ENCODE measurements at regions of chr16 and their contacts with region 1.

Region 1: DNA sequence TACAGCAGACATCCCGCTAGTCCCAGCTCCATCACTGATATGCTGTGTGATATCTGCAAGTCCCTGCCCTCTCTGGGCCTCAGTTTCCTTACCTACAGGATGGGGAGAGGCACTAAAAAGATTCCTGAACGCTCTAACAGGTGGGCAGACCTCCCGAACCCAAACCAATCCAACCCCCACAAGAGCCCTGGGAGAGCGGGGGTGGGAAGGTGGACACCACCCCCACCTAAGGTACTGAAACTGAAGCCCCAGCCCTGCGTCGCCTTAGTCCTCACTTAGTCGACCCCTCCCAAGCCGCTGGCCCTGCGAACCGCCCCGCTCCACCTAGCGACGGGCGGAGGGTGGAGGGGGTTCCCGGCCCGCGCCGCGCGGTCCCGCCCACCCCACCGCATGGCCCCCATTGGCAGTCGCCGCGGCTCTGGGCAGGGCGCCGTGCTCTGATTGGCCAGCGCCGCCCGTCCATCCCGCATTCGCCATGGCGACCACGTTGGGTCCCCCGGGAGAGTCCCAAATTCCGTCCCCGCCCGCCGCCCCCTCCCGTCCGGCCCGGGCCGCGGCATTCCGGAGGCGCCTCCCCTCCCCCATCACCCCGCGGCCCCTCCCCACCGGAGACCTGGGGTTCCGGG is 578 bp downstream of the CCDC102A start:
- DNase-seq: peak; percentile 97
- ATAC-seq: peak; percentile 80
- H3K4me3 Mint-ChIP-seq: peak overlapping the region; percentile 78
- H3K27ac Mint-ChIP-seq: peak overlapping the region; percentile 94
- H3K4me1 Mint-ChIP-seq: peaks cover 70% of the 10 kb centered on the region
- H3K27me3 Mint-ChIP-seq: no peaks in the 10 kb centered on the region

Region 2: GRCh38 chr16:57300387-57301125 is 235.2 kb before region 1 on chr16:
- CTCF ChIA-PET with region 1: no interaction called
- POLR2A ChIA-PET with region 1: no interaction called
- intact Hi-C with region 1: loop called (anchors 1 to 5 kb)
- DNase-seq: peak; percentile 99
- ATAC-seq: peak; percentile 89
- H3K4me3 Mint-ChIP-seq: no peak overlapping the region
- H3K27ac Mint-ChIP-seq: no peak overlapping the region
- H3K4me1 Mint-ChIP-seq: peaks cover 3% of the 10 kb centered on the region
- H3K27me3 Mint-ChIP-seq: no peaks in the 10 kb centered on the region

Region 3: GRCh38 chr16:57432989-57433388 is 102.8 kb before region 1 on chr16:
- CTCF ChIA-PET with region 1: no interaction called
- POLR2A ChIA-PET with region 1: no interaction called
- intact Hi-C with region 1: no loop called
- DNase-seq: no peak
- ATAC-seq: no peak
- H3K4me3 Mint-ChIP-seq: no peak overlapping the region
- H3K27ac Mint-ChIP-seq: peak overlapping the region; percentile 49
- H3K4me1 Mint-ChIP-seq: peaks cover 28% of the 10 kb centered on the region
- H3K27me3 Mint-ChIP-seq: no peaks in the 10 kb centered on the region

Region 4: GRCh38 chr16:57475711-57476339 is 60.0 kb before region 1 on chr16:
- CTCF ChIA-PET with region 1: interaction called, 5 read pairs
- POLR2A ChIA-PET with region 1: no interaction called
- intact Hi-C with region 1: loop called in 1 of 2 experiments (anchors 1 kb)
- DNase-seq: peak; percentile 95
- ATAC-seq: peak; percentile 98
- H3K4me3 Mint-ChIP-seq: no peak overlapping the region
- H3K27ac Mint-ChIP-seq: peak overlapping the region; percentile 63
- H3K4me1 Mint-ChIP-seq: peaks cover 19% of the 10 kb centered on the region
- H3K27me3 Mint-ChIP-seq: no peaks in the 10 kb centered on the region

Region 5: DNA sequence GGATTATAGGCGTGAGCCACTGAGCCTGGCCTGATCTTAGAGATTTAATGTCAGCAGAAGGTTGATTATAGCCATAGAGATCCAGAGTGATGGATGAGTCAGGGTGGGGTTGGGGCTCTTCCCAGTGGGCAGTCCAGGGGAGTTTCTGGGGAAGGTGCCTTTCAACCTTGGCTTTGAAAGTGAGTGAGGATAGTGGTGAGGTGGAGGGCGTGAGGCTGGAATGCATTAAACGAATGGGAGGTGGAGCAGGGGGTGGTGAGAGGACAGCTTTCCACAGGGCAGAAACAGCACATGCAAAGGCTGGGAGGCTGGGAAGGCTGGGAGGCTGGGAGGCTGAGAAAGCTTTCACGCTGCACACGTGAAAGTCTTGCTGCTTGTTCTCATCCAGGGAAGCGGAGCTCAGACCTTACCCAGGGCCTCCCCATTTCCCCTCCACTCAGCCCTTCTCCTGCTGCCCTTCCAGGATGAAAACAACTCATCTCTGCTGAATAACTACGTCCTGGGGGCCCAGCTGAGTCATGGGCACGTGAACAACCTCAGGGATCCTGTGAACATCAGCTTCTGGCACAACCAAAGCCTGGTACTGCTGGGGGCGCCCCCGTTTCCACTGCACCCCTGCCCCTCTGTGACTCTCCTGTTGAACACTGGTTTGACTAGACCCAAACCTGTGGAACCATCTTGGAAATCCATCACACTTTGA is 28.9 kb after region 1 on chr16:
- CTCF ChIA-PET with region 1: no interaction called
- POLR2A ChIA-PET with region 1: no interaction called
- intact Hi-C with region 1: no loop called
- DNase-seq: no peak
- ATAC-seq: no peak
- H3K4me3 Mint-ChIP-seq: no peak overlapping the region
- H3K27ac Mint-ChIP-seq: no peak overlapping the region
- H3K4me1 Mint-ChIP-seq: peaks cover 6% of the 10 kb centered on the region
- H3K27me3 Mint-ChIP-seq: peaks cover 2% of the 10 kb centered on the region

Region 6: DNA sequence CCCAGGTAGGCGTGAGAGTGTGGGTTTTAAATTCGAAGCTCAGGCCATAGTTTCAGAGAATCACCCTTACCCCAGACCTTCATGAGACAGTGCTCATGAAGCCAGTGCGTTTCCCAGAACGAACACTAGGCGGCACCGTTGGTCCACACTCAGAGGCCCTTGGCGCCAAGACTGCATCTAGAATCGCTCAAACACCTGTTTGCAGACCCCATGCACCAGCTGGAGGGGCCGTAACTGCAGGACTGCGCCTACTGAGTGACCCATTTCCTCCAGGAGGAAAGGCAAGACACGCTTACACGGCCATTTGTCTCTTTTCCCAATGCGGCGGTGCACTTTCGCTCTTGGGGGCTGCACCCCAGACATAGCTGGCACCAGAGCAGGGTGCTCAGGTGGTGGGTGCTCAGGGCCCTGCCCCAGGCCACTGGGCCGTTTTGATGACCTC is 40.7 kb after region 1 on chr16:
- CTCF ChIA-PET with region 1: interaction called, 7 read pairs
- POLR2A ChIA-PET with region 1: no interaction called
- intact Hi-C with region 1: loop called in 1 of 2 experiments (anchors 2 kb)
- DNase-seq: peak; percentile 91
- ATAC-seq: peak; percentile 82
- H3K4me3 Mint-ChIP-seq: no peak overlapping the region
- H3K27ac Mint-ChIP-seq: no peak overlapping the region
- H3K4me1 Mint-ChIP-seq: peaks cover 33% of the 10 kb centered on the region
- H3K27me3 Mint-ChIP-seq: peaks cover 5% of the 10 kb centered on the region

Region 7: GRCh38 chr16:57720142-57720575 is 184.4 kb after region 1 on chr16:
- CTCF ChIA-PET with region 1: no interaction called
- POLR2A ChIA-PET with region 1: no interaction called
- intact Hi-C with region 1: no loop called
- DNase-seq: peak; percentile 74
- ATAC-seq: peak; percentile 80
- H3K4me3 Mint-ChIP-seq: no peak overlapping the region
- H3K27ac Mint-ChIP-seq: no peak overlapping the region
- H3K4me1 Mint-ChIP-seq: no peaks in the 10 kb centered on the region
- H3K27me3 Mint-ChIP-seq: no peaks in the 10 kb centered on the region

Region 8: DNA sequence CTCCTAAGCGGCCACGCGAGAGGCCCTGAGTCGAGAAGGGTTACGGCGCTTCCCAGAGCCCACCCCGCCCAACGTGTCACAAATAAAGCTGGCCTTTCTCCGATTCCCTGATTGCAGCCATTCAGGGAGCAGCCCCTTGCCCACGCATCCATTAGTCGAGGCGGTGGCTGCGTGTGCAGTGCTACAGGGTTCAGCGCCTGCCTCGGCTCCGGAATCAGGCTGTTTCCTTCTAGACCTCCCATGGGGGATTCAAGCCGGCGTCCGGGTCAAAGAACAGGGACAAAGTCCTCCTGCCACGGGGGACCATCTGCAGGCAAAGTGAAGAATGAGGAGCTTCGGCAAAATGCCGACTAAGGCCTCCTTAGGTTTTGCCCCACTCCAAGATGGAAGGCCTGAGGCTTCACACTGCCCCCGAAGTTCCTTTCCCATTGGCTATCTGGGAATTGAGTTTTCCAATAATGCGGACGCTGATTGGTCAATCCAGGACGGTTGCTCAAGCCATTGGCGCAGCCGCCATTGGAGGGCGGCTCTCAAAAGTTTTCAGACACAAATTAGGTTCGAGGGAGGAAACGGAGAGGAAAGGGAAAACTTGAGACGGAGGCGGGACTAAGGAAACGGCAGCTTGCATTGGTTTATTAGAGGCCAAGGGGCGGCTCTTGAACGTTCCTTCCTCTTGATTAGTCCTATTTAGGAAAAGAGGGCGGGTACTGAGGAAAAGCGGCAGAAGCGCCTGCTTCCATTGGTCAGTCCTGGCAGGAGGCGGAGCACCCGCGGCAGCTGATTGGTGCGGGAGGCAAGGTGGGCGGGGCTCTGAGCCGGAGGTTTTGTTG is 199.3 kb after region 1 on chr16:
- CTCF ChIA-PET with region 1: no interaction called
- POLR2A ChIA-PET with region 1: no interaction called
- intact Hi-C with region 1: loop called in 1 of 2 experiments (anchors 1 kb)
- DNase-seq: peak; percentile 98
- ATAC-seq: peak; percentile 95
- H3K4me3 Mint-ChIP-seq: peak overlapping the region; percentile 92
- H3K27ac Mint-ChIP-seq: peak overlapping the region; percentile 96
- H3K4me1 Mint-ChIP-seq: peaks cover 22% of the 10 kb centered on the region
- H3K27me3 Mint-ChIP-seq: no peaks in the 10 kb centered on the region